MCF 10A (cell line): ENCODE measurements at regions of chr1 and their contacts with region 1.

Region 1: DNA sequence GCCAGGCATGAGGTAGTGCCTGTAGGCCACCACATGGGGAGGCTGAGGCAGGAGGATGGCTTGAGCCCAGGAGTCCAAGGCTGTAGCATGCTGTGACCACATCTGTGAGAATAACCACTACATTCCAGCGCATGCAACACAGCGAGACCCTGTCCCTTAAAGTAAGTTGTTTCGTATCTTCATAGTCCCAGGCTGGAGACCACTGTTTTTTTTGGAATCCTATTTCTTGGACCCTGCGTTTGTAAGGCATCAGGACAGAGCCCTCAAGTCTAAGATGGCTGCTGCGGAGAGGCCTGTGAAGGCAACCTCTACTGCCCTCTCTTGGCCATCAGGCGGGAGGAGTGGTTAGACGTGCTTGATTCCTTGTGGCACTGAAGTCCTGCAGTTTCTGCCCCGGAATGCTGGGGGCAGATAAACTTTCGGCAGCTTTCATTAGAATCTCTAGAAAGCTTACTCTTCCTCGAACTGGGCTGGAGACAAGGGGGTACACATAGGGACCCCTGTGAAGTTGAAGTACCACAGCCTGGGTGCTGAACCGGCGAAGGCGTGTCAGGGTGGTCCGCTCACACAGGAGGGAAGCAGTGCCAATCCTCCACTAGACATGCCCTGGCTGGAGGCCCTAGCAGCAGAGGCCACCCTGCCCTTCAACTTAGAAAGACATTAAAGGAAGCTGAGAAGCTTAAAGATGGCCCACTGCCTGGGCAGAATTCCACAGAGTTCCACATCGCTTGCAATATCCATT is 36.6 kb downstream of the RABIF start:
- DNase-seq: peak; percentile 88
- H3K4me3 Mint-ChIP-seq: no peak overlapping the region
- H3K27ac Mint-ChIP-seq: no peak overlapping the region
- H3K4me1 Mint-ChIP-seq: no peaks in the 10 kb centered on the region
- H3K27me3 Mint-ChIP-seq: no peaks in the 10 kb centered on the region
- CTCF ChIP-seq: peak; percentile 87

Region 2: DNA sequence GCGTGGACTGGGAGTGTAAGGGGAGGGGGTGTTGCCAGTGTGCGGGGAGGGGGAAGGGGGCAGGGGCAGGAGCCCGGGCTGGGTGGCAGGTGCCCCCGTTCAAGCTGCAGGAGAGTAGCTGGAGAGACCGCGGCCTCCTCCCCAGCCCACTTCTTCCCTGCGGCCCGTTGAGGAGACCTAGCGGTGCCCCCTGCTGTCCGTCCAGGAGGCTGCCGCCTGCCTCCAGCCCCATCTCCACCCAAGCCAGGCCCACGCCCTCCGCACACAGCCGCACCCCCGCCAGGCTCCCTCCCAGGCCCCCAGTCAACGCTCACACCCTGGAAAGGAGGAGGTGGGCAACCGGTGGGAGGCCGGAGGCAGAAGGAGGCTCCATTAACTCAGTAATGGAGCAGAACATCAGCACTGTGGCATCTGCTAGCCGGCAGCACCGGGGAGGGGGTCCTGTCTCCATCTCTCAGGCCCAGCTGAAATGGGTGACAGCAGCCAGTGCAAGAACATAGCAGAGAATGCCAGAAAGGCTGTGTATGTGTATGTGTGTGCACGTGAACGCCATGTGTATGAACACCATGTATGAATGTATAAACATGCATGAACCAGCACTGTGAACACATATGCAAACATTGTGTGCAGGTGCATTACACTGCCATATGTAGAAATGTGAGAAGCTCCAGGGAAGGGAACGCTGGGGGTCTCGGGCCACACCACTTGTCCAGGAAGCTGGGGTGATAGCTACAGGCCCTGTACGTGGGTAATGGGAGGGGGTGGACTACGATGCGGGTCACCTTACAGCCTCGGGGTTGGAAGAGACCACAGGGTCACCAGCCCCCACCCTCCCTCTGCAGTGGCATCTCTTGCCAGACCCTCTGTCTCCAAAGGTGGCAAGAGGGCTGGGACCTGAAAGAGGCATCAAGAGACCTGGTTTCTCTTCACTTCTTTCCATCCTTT is 226.6 kb before region 1 on chr1:
- CTCF ChIA-PET with region 1: no interaction called
- POLR2A ChIA-PET with region 1: no interaction called
- intact Hi-C with region 1: no loop called
- DNase-seq: peak; percentile 80
- H3K4me3 Mint-ChIP-seq: no peak overlapping the region
- H3K27ac Mint-ChIP-seq: no peak overlapping the region
- H3K4me1 Mint-ChIP-seq: no peaks in the 10 kb centered on the region
- H3K27me3 Mint-ChIP-seq: peaks cover 21% of the 10 kb centered on the region
- CTCF ChIP-seq: peak; percentile 97

Region 3: DNA sequence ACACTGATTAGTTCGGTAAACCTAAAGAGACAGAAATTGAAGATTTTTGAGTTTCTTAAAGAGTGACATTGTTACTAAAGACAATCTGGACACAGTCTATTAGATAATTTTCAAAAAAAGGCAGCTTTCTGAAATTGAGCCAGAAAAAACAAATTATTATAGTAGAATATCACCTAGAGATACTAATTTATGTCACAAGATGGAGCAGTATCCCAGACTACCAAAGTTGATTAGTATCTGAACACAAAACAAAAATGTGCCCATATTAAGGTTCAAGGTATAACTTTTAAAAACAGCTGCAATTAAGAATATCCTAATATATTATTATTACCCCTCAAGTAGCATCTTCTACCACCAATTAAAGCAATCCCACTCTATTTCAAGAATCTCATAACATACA is 101.6 kb before region 1 on chr1:
- CTCF ChIA-PET with region 1: interaction called, 8 read pairs
- POLR2A ChIA-PET with region 1: interaction called, 3 read pairs
- intact Hi-C with region 1: loop called (anchors 2 kb)
- DNase-seq: peak; percentile 12
- H3K4me3 Mint-ChIP-seq: no peak overlapping the region
- H3K27ac Mint-ChIP-seq: no peak overlapping the region
- H3K4me1 Mint-ChIP-seq: no peaks in the 10 kb centered on the region
- H3K27me3 Mint-ChIP-seq: no peaks in the 10 kb centered on the region
- CTCF ChIP-seq: peak; percentile 24

Region 4: DNA sequence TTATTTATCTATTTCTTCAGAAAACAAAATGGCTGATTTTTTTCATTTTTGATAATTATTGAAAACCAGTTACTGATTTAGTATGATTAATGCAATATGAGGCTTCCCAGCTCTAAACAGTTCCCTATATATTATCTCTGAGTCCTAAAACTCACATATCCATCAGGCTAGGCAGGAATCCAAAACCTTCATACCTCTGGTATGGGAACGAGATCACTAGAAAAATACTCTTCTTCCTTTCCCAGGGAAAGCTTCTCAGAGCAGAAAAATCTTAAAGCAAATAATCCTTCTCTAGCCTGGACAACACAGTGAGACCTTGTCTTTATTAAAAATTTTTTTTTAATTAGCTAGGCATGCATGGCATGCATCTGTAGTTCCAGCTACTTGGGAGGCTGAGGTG is 86.6 kb before region 1 on chr1:
- CTCF ChIA-PET with region 1: interaction called, 6 read pairs
- POLR2A ChIA-PET with region 1: no interaction called
- intact Hi-C with region 1: loop called (anchors 5 kb)
- DNase-seq: no peak
- H3K4me3 Mint-ChIP-seq: no peak overlapping the region
- H3K27ac Mint-ChIP-seq: no peak overlapping the region
- H3K4me1 Mint-ChIP-seq: peaks cover 8% of the 10 kb centered on the region
- H3K27me3 Mint-ChIP-seq: no peaks in the 10 kb centered on the region
- CTCF ChIP-seq: no peak

Region 5: GRCh38 chr1:202835548-202836090 is 16.7 kb before region 1 on chr1:
- CTCF ChIA-PET with region 1: interaction called, 13 read pairs
- POLR2A ChIA-PET with region 1: no interaction called
- intact Hi-C with region 1: no loop called
- DNase-seq: no peak
- H3K4me3 Mint-ChIP-seq: no peak overlapping the region
- H3K27ac Mint-ChIP-seq: no peak overlapping the region
- H3K4me1 Mint-ChIP-seq: peaks cover 20% of the 10 kb centered on the region
- H3K27me3 Mint-ChIP-seq: no peaks in the 10 kb centered on the region
- CTCF ChIP-seq: no peak